Activated CD4-positive, alpha-beta memory T cell treated with anti-CD3 and anti-CD28 coated beads for 36 hours (primary cell): ENCODE measurements at regions of chr19 and their contacts with region 1.

Region 1: GRCh38 chr19:4400135-4400936 is at the start of gene SH3GL1:
- DNase-seq: peak; percentile 94
- H3K4me3 Mint-ChIP-seq: peak within 1 kb of the TSS; percentile 82
- H3K27ac Mint-ChIP-seq: peak within 1 kb of the TSS; percentile 86
- H3K4me1 Mint-ChIP-seq: peaks cover 60% of the 10 kb centered on the region
- H3K27me3 Mint-ChIP-seq: no peaks in the 10 kb centered on the region
- total RNA-seq, gene SH3GL1: 38.1 to 42.0 TPM

Region 2: DNA sequence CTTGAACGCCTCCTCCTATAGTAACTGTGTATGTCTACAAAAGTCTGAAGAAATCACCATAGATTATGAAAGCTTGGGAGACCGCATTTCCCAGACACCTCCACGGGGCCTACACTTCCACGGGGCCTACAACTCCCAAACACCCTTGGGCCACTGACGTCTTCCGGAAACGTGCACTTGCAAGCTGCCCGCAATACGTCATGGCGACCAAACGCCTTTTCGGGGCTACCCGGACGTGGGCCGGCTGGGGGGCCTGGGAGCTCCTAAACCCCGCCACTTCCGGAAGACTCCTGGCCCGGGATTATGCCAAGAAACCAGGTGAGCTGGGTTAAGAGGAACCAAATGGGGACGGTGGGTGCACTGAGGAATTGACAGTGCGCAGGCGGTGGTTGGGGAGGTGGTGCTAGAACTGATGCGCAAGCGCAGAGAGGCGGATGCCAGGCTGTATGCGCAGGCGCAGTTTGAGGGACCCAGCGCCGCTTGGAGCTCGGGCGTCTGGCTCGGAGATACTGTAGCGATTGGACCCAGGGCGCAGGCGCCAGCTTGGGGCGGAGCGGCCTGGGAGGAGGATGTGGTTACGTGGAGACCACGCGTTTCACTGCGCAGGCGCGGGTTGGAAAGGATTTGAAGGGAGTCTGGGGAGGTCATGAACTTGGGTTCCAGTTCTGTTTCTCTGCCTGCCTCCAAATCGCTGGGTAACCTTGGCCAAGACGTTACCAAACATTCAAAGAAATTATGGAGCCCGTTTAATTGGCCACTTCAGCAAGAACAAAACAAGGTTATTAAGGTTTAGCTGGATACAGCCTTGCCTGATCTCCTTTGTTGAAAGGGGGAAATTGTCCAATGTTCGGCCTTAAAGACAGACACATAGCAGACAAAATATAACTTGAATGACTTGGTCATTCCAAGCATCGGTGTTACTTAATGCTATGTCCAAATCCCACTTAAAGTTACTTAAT is 637.6 kb before region 1 on chr19 and contains the start of gene MRPL54:
- CTCF ChIA-PET with region 1: no interaction called
- POLR2A ChIA-PET with region 1: no interaction called
- intact Hi-C with region 1: loop called (anchors 2 kb)
- DNase-seq: peak; percentile 100
- H3K4me3 Mint-ChIP-seq: peak within 1 kb of the TSS; percentile 99
- H3K27ac Mint-ChIP-seq: peak within 1 kb of the TSS; percentile 99
- H3K4me1 Mint-ChIP-seq: peaks cover 34% of the 10 kb centered on the region
- H3K27me3 Mint-ChIP-seq: no peaks in the 10 kb centered on the region
- total RNA-seq, gene MRPL54: 63.2 to 65.2 TPM

Region 3: DNA sequence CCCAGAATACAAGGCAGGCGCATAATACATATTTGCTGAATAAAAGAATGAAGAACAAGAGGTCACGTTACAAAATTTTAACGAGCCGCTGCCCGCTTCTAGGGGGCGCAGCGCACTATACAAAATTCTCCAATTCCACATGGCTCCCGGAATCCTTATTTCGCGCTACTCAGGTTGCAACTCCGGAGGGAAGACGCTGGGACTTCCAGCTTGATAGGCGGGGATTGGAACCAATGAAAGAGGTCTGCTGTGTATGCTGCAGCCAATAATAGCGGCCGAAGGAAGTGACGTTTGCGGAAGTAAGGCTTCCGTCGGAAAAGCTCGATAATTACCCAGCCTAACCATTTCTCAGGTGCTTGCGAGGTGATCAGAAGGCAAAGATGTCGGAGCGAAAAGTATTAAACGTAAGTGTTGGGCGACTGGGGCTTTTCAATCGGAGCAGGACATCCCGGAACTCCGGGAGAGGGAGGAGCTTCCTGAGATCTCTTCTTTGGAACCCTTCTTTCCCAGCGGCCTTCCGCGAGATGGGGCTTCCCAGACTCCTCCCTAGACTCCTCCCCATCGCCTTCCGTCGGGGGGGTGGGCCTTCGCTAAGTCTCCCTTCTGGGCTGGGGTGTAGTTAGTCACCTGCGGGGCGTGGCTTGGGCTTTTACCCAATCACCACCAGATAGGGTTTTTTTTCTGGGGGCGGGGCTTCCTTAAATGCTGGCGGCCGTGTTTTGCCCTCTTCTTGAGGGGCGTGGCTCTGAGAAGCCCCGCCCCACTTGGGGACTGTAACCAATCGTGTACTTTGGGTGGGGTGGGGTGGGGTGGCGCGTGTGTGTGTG is 153.4 kb before region 1 on chr19 and contains the start of gene YJU2:
- CTCF ChIA-PET with region 1: interaction called, 8 read pairs
- POLR2A ChIA-PET with region 1: interaction called, 4 read pairs
- intact Hi-C with region 1: loop called (anchors 1 kb)
- DNase-seq: peak; percentile 99
- H3K4me3 Mint-ChIP-seq: peak within 1 kb of the TSS; percentile 83
- H3K27ac Mint-ChIP-seq: peak within 1 kb of the TSS; percentile 96
- H3K4me1 Mint-ChIP-seq: peaks cover 19% of the 10 kb centered on the region
- H3K27me3 Mint-ChIP-seq: no peaks in the 10 kb centered on the region
- total RNA-seq, gene YJU2: 24.0 to 25.5 TPM

Region 4: GRCh38 chr19:4328243-4328990 is 71.9 kb before region 1 on chr19:
- CTCF ChIA-PET with region 1: interaction called, 5 read pairs
- POLR2A ChIA-PET with region 1: interaction called, 4 read pairs
- intact Hi-C with region 1: loop called (anchors 1 kb)
- DNase-seq: peak; percentile 98
- H3K4me3 Mint-ChIP-seq: peak overlapping the region; percentile 85
- H3K27ac Mint-ChIP-seq: peak overlapping the region; percentile 81
- H3K4me1 Mint-ChIP-seq: peaks cover 26% of the 10 kb centered on the region
- H3K27me3 Mint-ChIP-seq: peaks cover 3% of the 10 kb centered on the region

Region 5: GRCh38 chr19:4369888-4370260 is 30.5 kb before region 1 on chr19:
- CTCF ChIA-PET with region 1: interaction called, 52 read pairs
- POLR2A ChIA-PET with region 1: interaction called, 23 read pairs
- intact Hi-C with region 1: loop called (anchors 1 kb)
- DNase-seq: peak; percentile 88
- H3K4me3 Mint-ChIP-seq: peak overlapping the region; percentile 65
- H3K27ac Mint-ChIP-seq: peak overlapping the region; percentile 95
- H3K4me1 Mint-ChIP-seq: peaks cover 46% of the 10 kb centered on the region
- H3K27me3 Mint-ChIP-seq: no peaks in the 10 kb centered on the region

Region 6: GRCh38 chr19:4457654-4458395 is 57.5 kb after region 1 on chr19 and contains the start of gene UBXN6:
- CTCF ChIA-PET with region 1: no interaction called
- POLR2A ChIA-PET with region 1: interaction called, 3 read pairs
- intact Hi-C with region 1: loop called (anchors 1 kb)
- DNase-seq: peak; percentile 99
- H3K4me3 Mint-ChIP-seq: peak within 1 kb of the TSS; percentile 82
- H3K27ac Mint-ChIP-seq: peak within 1 kb of the TSS; percentile 82
- H3K4me1 Mint-ChIP-seq: peaks cover 19% of the 10 kb centered on the region
- H3K27me3 Mint-ChIP-seq: no peaks in the 10 kb centered on the region
- total RNA-seq, gene UBXN6: 36.2 to 37.1 TPM

Region 7: DNA sequence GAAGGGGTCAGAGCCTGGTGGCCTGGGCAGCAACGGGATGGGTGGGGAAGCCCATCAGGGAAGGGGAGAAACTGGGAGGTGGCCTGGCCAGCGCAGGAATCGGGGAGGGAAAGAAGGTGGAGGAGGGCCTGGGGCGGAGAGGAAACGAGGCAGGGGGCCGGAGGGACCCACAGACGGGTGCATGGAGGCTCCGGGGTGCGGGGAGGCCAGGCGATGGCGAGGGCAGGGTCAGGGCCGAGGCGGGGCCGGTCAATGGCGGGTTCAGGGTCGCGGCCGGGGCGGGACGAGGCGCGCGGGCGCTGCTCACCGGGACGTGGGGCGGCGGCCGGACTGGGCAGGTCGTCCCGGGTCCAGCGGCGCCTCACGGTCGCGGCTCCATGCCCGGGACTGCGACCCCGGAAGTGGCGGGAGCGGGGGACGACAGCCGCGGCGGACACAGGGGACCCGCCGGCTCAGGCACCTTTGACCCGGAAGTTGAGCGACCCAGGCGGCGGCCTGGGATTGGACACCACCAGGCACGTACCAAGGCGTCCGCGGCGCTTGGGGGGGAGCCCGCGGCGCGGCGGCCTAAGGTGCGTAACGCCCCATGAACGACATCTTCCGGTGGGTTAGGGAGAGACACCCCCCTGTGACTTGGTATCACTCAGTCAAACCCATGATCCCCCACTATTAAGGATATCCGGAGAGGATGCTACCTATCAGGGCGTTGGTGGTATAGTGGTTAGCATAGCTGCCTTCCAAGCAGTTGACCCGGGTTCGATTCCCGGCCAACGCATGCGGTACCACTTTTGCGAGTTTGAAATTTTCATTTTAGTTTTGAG is 323.2 kb after region 1 on chr19 and contains the start of gene DPP9:
- CTCF ChIA-PET with region 1: no interaction called
- POLR2A ChIA-PET with region 1: no interaction called
- intact Hi-C with region 1: loop called (anchors 5 kb)
- DNase-seq: peak; percentile 98
- H3K4me3 Mint-ChIP-seq: peak within 1 kb of the TSS; percentile 84
- H3K27ac Mint-ChIP-seq: peak within 1 kb of the TSS; percentile 95
- H3K4me1 Mint-ChIP-seq: peaks cover 28% of the 10 kb centered on the region
- H3K27me3 Mint-ChIP-seq: peaks cover 5% of the 10 kb centered on the region
- total RNA-seq, gene DPP9: 54.8 to 57.5 TPM